Activated T-helper 2 cell treated with anti-CD3 and anti-CD28 coated beads, Interferon-gamma antibody, Interleukin-2, Interleukin-4, amounts not matched to agents 10 μg/mL and 5 μg/mL and 100 μg/mL, durations not matched to agents 14 hours and 24 hours and 36 hours (primary cell): ENCODE measurements at regions of chr2 and their contacts with region 1.

Region 1: DNA sequence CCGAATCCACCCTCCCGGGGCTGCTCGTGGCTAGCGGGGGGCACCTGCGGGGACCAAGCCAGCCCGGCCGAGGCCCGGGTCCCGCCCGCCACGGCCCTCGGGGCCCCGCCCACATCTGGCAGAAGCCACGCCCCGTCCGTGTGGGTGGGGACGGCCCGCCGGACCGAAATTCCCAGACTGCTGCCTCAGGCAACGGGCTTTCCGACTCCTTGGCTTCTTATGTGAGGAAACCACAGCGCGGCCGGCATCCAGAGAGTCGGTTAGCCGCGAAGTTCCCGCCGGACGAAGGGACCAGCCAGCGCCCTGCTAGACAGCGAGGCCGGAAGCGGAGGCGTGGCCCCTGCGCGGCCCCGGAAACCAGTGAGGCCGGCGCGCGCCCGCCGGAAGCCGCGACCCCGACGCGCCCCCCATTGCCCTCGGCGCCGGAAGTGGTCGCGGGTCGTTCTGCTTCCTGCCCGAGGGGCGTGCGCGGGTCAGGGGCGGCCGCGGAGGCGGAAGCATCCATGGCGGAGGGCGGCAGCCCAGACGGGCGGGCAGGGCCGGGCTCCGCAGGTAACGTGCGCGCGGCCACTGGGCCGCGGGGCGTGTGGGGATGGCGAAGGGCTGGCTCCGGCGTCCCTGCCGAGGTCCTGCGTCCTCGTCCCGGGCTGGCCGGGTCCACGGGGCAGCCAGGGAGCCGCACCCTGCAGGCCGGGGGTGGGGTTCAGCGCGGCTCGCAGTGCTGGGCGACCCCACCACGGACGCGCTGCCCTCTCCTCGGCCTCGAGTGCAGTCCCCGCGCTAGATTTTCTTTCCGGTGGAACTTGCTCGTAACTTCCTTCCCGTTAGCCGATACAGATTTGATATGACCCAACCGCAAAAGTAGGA is at the start of gene ASB1:
- DNase-seq: peak; percentile 78
- H3K4me3 Mint-ChIP-seq: peak within 1 kb of the TSS; percentile 89
- H3K27ac Mint-ChIP-seq: peak within 1 kb of the TSS; percentile 91
- H3K4me1 Mint-ChIP-seq: peaks cover 25% of the 10 kb centered on the region
- H3K27me3 Mint-ChIP-seq: no peaks in the 10 kb centered on the region
- total RNA-seq, gene ASB1: 36.3 and 37.4 TPM in 2 replicates

Region 2: GRCh38 chr2:238370823-238371372 is 55.9 kb before region 1 on chr2:
- intact Hi-C with region 1: loop called (anchors 10 kb)
- DNase-seq: peak; percentile 30
- H3K4me3 Mint-ChIP-seq: no peak overlapping the region
- H3K27ac Mint-ChIP-seq: no peak overlapping the region
- H3K4me1 Mint-ChIP-seq: peaks cover 3% of the 10 kb centered on the region
- H3K27me3 Mint-ChIP-seq: peaks cover 3% of the 10 kb centered on the region